T-cell (primary cell): ENCODE measurements at regions of chr2 and their contacts with region 1.

Region 1: GRCh38 chr2:44342854-44343253 is 18.4 kb downstream of the PREPL start:
- DNase-seq: peak in 28 of 35 experiments; percentile 5 to 59 (median 16)
- ATAC-seq: peak in 2 of 4 experiments; percentile 19 to 72
- H3K4me3 ChIP-seq: no peak overlapping the region
- H3K4me3 Mint-ChIP-seq: no peak overlapping the region
- H3K27ac ChIP-seq: no peak overlapping the region
- H3K27ac Mint-ChIP-seq: no peak overlapping the region
- H3K4me1 ChIP-seq: no peaks in the 10 kb centered on the region
- H3K4me1 Mint-ChIP-seq: peaks cover 3 to 9% (median 8%) of the 10 kb centered on the region in 3 donors
- H3K27me3 ChIP-seq: no peaks in the 10 kb centered on the region
- H3K27me3 Mint-ChIP-seq: no peaks in the 10 kb centered on the region

Region 2: GRCh38 chr2:44044281-44044720 is 298.6 kb before region 1 on chr2:
- CTCF ChIA-PET with region 1: interaction called in 1 of 2 experiments, 13 read pairs
- POLR2A ChIA-PET with region 1: no interaction called
- DNase-seq: peak; percentile 42 to 81 (median 67)
- ATAC-seq: peak; percentile 96 to 100 (median 99)
- H3K4me3 ChIP-seq: no peak overlapping the region
- H3K4me3 Mint-ChIP-seq: no peak overlapping the region
- H3K27ac ChIP-seq: no peak overlapping the region
- H3K27ac Mint-ChIP-seq: no peak overlapping the region
- H3K4me1 ChIP-seq: peaks cover 0 to 7% of the 10 kb centered on the region in 2 experiments
- H3K4me1 Mint-ChIP-seq: peaks cover 2 to 6% (median 5%) of the 10 kb centered on the region in 3 donors
- H3K27me3 ChIP-seq: peaks cover 0 to 6% of the 10 kb centered on the region in 2 experiments
- H3K27me3 Mint-ChIP-seq: no peaks in the 10 kb centered on the region

Region 3: DNA sequence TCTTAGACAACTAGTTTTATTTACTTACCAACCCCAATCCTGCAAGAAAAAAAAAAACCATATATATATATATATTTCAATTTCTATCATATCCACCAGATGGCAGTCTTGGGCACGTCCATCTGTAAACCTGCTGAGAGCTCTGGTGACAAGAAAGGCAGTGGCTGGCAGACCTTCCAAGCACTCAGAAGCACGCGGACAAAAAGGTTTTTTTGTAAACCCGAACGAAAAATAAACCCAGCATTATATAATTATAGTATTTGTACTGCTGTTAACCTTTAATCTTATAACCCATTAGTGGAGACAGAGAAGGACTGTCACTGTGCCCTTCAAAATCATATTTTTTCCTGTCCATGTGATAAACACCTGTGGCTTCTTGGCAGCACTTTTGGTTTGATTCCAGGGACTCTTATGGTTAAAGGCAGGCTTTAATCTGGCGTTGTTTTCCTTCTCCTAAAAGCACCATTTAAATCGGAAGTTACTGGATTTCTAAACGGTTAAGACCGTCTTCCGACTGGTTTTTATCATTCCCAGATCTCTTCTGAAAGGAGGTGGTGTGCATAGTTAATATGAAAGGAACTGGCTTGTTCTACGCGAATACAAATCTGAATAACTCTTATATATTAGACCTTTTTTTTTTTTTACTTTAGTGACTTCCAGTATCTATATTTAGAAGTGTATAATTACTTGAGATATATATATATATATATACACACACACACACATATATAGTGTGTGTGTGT is 98.6 kb before region 1 on chr2:
- CTCF ChIA-PET with region 1: interaction called, 3 to 10 read pairs
- POLR2A ChIA-PET with region 1: no interaction called
- DNase-seq: peak in 34 of 35 experiments; percentile 20 to 86 (median 43)
- ATAC-seq: peak; percentile 83 to 92 (median 86)
- H3K4me3 ChIP-seq: peak overlapping the region in 1 of 2 donors; percentile 33
- H3K4me3 Mint-ChIP-seq: peak overlapping the region; percentile 72 to 83 (median 73)
- H3K27ac ChIP-seq: no peak overlapping the region
- H3K27ac Mint-ChIP-seq: peak overlapping the region; percentile 31 to 70
- H3K4me1 ChIP-seq: peaks cover 4 to 5% of the 10 kb centered on the region in 2 experiments
- H3K4me1 Mint-ChIP-seq: peaks cover 30 to 34% (median 32%) of the 10 kb centered on the region in 3 donors
- H3K27me3 ChIP-seq: no peaks in the 10 kb centered on the region
- H3K27me3 Mint-ChIP-seq: no peaks in the 10 kb centered on the region